Heart right ventricle (tissue), 16 donors: ENCODE measurements at regions of chr22 and their contacts with region 1.

Region 1: DNA sequence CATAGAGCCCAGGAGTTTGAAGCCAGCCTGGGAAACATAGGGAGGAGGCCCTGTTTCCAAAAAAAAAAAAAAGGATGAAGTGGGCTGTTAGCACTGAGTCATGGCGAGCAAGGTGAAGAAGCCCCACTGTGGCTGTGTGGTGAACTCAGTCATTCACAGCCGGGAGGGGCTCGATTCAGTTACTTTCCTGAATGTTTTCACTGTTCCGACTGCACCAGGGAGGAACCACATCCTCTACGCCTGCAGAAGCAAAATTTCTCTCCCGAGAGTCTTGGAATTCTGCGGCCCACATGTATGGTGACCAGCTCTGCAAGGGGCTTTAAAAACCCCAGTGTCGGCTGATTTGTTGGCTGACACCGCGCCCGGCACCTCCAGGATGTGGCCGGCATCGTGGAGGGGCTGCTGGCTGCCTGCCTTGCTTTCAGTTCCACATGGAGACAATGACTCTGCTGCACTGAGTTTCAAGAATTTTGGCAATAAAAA is 27.8 kb upstream of the GRAMD4 start:
- DNase-seq: peak; percentile 69 to 70
- ATAC-seq: peak in 6 of 8 donors; percentile 0 to 47 (median 14)
- H3K4me3 ChIP-seq: peak overlapping the region in 6 of 10 donors; percentile 23 to 47 (median 32)
- H3K27ac ChIP-seq: peak overlapping the region; percentile 7 to 91 (median 83)
- H3K4me1 ChIP-seq: peaks cover 39 to 93% (median 77%) of the 10 kb centered on the region in 9 donors
- H3K27me3 ChIP-seq: no peaks in the 10 kb centered on the region
- CTCF ChIP-seq: no peak

Region 2: DNA sequence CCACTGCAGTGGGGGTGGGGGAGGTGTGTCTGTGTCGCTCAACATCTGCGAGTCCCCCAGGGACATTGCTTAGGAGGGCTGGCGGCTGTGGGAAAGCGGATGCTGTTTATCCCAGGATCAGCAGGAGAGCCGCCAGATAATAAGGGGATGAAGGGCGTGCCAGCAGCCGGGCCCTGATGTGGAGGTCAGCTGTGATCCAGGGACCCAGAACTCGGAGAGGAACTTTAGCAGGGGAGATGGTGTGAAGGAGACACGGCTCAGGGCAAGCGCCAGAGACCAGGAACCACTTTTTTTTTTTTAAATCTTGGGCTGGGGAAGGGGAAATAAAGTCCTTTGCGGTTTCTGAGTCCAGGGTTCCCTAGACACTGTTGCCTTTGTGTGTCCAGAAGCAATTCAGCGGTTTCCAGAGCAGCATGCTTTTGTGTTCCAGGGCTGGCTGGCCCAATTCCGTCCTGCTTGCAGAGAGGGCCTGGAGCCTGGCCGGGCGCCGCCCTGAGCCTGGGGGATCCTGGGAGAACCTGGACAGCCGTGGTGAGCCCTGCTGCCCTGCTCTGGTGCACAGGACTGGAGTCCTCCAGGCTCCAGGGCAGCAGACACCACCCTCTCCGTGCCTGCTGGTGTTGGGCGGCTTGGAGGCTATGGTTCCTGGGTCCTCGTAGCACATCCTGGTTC is 27.5 kb after region 1 on chr22 and contains the start of gene GRAMD4:
- intact Hi-C with region 1: loop called in 1 of 10 experiments (anchors 5 kb)
- DNase-seq: peak; percentile 72 to 74
- ATAC-seq: peak; percentile 18 to 74 (median 56)
- H3K4me3 ChIP-seq: peak within 1 kb of the TSS in 1 of 10 donors; percentile 28
- H3K27ac ChIP-seq: peak within 1 kb of the TSS; percentile 44 to 87 (median 80)
- H3K4me1 ChIP-seq: peaks cover 36 to 79% (median 66%) of the 10 kb centered on the region in 9 donors
- H3K27me3 ChIP-seq: no peaks in the 10 kb centered on the region
- CTCF ChIP-seq: no peak
- total RNA-seq, gene GRAMD4: 53.9 to 143 (median 71.0) TPM

Region 3: DNA sequence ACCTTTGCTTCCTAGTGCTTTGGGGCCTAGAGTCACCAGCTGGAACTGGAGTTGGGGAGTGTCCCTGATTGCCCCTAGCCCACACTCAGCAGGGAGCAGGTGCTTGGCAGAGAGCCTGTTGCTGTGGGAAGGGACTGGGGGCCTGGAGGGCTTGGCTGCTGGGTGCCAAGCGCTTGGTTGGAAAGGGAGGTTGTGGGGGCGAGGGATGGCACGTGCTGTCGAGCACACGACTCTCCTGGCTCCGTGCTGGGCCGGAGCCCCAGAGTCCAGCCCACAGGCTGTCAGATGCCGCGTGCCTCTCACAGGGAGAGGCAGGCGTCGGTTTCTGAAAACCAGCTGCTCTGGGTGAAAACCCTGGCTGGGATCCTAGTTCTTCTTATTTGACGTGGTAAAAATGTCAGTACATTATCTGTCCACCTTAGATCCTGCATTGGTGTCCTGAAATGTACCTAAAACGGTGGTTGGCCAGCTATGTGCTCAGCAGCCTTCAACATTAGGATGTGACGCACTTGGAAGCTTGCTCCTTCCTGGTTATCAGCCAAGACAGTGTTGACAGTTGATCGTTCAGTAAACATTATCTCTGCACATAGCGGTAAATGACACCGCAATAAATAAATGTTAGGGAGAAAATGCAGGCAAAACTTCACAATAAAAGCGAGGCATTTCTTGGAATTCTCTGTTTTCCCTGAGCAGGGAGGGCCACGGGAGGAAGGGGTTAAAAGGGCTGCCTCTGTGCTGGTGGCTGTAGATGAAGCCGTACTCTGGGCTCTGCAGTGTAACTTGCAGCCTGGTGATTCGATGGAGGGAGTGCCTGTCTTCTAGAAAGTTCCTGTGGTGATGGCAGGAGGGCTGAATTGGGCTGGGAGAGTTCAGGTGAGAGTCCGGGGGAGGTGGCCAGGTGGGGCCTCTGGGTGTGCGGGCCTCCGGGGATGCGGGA is 57.0 kb after region 1 on chr22:
- intact Hi-C with region 1: loop called in 1 of 10 experiments (anchors 5 kb)
- DNase-seq: peak; percentile 58 to 72
- ATAC-seq: peak; percentile 48 to 79 (median 73)
- H3K4me3 ChIP-seq: no peak overlapping the region
- H3K27ac ChIP-seq: peak overlapping the region; percentile 75 to 94 (median 86)
- H3K4me1 ChIP-seq: peaks cover 55 to 96% (median 81%) of the 10 kb centered on the region in 9 donors
- H3K27me3 ChIP-seq: no peaks in the 10 kb centered on the region
- CTCF ChIP-seq: no peak

Region 4: GRCh38 chr22:46660604-46661201 is 68.3 kb after region 1 on chr22:
- intact Hi-C with region 1: no loop called
- DNase-seq: no peak
- ATAC-seq: peak in 2 of 8 donors; percentile 5 to 13
- H3K4me3 ChIP-seq: no peak overlapping the region
- H3K27ac ChIP-seq: peak overlapping the region in 8 of 10 donors; percentile 6 to 76 (median 38)
- H3K4me1 ChIP-seq: peaks cover 6 to 42% (median 20%) of the 10 kb centered on the region in 9 donors
- H3K27me3 ChIP-seq: no peaks in the 10 kb centered on the region
- CTCF ChIP-seq: no peak

Region 5: DNA sequence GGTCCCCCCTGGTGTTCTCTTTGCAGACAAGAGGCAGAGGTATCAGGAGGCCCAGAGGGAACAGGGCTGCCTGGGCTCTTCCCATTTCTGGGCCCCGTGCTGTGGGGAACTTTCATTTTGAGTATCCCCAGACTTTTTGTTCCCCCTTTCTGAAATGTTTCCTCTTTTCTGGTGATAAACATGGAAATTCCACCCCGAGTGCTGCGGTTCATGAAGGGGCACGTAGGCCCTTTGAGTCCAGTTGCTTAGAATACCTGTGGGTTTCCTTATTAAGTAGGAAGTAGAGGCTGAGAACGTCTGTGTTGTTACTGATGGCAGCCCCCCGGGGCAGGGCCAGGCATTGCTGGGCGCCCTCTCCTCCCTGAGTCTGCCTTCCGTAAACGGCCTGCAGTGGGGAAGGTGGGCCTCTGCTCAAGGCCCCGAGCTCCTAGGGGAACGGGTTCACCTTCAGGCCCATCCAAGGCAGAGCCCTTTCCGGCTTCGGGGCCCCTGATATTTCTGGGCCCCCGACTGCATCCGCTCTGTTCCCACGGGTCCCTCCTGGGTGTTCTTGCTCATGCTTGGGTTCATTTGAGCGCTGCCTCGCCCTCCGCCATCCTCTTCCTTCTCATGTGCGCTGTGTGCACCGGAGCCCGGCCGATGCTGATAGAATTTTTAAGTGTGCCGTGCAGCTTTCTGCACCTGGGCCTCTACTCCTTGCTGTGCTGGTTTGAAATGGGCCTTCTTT is 182.0 kb after region 1 on chr22:
- intact Hi-C with region 1: no loop called
- DNase-seq: no peak
- ATAC-seq: peak in 7 of 8 donors; percentile 1 to 71 (median 49)
- H3K4me3 ChIP-seq: no peak overlapping the region
- H3K27ac ChIP-seq: peak overlapping the region in 8 of 10 donors; percentile 20 to 87 (median 61)
- H3K4me1 ChIP-seq: peaks cover 14 to 81% (median 64%) of the 10 kb centered on the region in 9 donors
- H3K27me3 ChIP-seq: no peaks in the 10 kb centered on the region
- CTCF ChIP-seq: no peak